ENCODE measurements at regions of chr5 and their contacts with region 1.

Region 1: GRCh38 chr5:173789031-173789920 is 98.9 kb upstream of the CPEB4 start:
- DNase-seq: peak; percentile 54
- CTCF ChIP-seq: no peak

Region 2: DNA sequence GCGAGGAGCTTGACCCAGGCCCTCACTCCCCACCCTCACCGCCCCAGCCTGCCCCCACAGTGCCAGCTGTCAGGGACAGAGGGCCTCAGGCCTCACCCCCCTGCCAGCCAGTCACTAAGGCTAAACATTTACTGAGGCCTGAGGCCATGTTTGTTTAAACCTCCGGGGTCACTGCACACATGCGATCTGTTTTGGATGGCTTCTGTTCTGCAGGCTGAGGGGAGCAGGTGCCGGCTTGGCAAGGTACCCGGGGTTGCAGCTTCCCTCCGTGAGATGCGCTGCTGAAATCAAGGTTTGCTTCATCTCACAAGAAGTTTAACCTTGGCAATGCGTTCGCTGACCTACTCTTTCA is 69.6 kb before region 1 on chr5:
- CTCF ChIA-PET with region 1: no interaction called
- POLR2A ChIA-PET with region 1: no interaction called
- DNase-seq: no peak
- CTCF ChIP-seq: no peak

Region 3: GRCh38 chr5:173778784-173779304 is 10.4 kb before region 1 on chr5:
- CTCF ChIA-PET with region 1: interaction called, 27 read pairs
- POLR2A ChIA-PET with region 1: no interaction called
- DNase-seq: no peak
- CTCF ChIP-seq: no peak

Region 4: GRCh38 chr5:173829817-173830216 is 40.5 kb after region 1 on chr5:
- CTCF ChIA-PET with region 1: interaction called, 24 read pairs
- POLR2A ChIA-PET with region 1: no interaction called
- DNase-seq: no peak
- CTCF ChIP-seq: no peak